ENCODE measurements at regions of chr6 and their contacts with region 1.

Region 1: GRCh38 chr6:73520688-73521350 is at the start of gene EEF1A1:
- DNase-seq: peak; percentile 100
- H3K4me3 ChIP-seq: peak within 1 kb of the TSS; percentile 99
- H3K27ac ChIP-seq: peak within 1 kb of the TSS; percentile 100
- H3K27me3 ChIP-seq: no peaks in the 10 kb centered on the region
- CTCF ChIP-seq: no peak
- polyA plus RNA-seq, gene EEF1A1: 24,076 and 25,115 TPM in 2 replicates

Region 2: DNA sequence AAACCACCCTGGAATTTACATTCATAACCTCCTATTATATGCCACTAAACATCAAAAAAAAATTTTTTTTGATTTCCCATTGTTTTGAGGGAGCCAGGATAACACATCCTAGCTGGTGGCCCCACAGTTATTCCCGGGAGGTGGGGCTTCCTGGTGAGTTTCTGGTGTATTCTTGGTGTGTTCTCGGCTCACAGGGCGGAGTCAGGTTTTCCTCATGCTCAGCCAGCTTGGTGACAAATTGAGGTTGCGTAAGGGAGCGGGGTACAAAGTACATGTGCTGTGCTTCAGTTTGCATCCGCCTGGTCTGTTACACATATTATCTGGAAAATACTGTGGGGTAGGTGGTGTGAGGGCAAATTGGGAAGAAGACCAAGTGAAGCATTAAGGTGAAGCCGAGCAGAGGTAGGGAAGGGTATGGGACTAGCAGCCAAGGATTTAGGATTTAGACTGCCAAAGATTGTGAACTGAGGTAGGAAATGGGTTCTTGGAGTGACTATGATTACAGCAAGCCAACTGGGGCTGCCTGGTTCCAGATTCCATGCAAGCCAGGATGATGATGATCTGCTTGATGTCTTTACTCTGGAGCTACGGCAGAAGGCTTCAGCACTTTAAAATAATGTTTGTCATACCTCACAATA is 46.3 kb after region 1 on chr6:
- CTCF ChIA-PET with region 1: no interaction called
- POLR2A ChIA-PET with region 1: interaction called, 16 read pairs
- DNase-seq: no peak
- H3K4me3 ChIP-seq: no peak overlapping the region
- H3K27ac ChIP-seq: no peak overlapping the region
- H3K27me3 ChIP-seq: no peaks in the 10 kb centered on the region
- CTCF ChIP-seq: no peak

Region 3: GRCh38 chr6:73580247-73581149 is 59.7 kb after region 1 on chr6:
- CTCF ChIA-PET with region 1: interaction called, 3 read pairs
- POLR2A ChIA-PET with region 1: interaction called, 142 read pairs
- DNase-seq: peak; percentile 94
- H3K4me3 ChIP-seq: peak overlapping the region; percentile 50
- H3K27ac ChIP-seq: peak overlapping the region; percentile 100
- H3K27me3 ChIP-seq: no peaks in the 10 kb centered on the region
- CTCF ChIP-seq: peak; percentile 54

Region 4: GRCh38 chr6:73585566-73586415 is 65.0 kb after region 1 on chr6:
- CTCF ChIA-PET with region 1: no interaction called
- POLR2A ChIA-PET with region 1: interaction called, 142 read pairs
- DNase-seq: peak; percentile 34
- H3K4me3 ChIP-seq: peak overlapping the region; percentile 14
- H3K27ac ChIP-seq: peak overlapping the region; percentile 88
- H3K27me3 ChIP-seq: no peaks in the 10 kb centered on the region
- CTCF ChIP-seq: no peak

Region 5: DNA sequence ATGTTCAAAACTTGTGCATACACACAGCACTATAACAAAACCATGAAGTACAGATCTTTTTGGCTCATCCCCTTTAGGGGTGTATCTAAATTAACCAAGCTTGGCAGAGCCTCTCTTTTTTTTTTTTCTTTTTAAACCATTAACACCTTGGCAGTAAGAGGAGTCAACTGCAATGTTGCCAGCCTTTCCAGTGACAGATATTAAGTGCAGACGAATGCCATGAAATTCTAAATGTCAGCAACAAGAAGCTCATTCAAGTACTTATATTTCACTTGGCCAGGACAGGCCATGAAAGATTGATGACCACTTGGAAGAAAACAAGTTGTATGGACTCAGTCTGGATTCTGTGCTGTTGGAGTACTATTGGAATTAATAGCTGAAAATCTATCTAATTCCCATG is 83.2 kb after region 1 on chr6:
- CTCF ChIA-PET with region 1: interaction called, 3 read pairs
- POLR2A ChIA-PET with region 1: interaction called, 11 read pairs
- DNase-seq: no peak
- H3K4me3 ChIP-seq: no peak overlapping the region
- H3K27ac ChIP-seq: no peak overlapping the region
- H3K27me3 ChIP-seq: no peaks in the 10 kb centered on the region
- CTCF ChIP-seq: no peak

Region 6: GRCh38 chr6:73610444-73611275 is 89.8 kb after region 1 on chr6:
- CTCF ChIA-PET with region 1: interaction called, 19 read pairs
- POLR2A ChIA-PET with region 1: interaction called, 28 read pairs
- DNase-seq: no peak
- H3K4me3 ChIP-seq: no peak overlapping the region
- H3K27ac ChIP-seq: no peak overlapping the region
- H3K27me3 ChIP-seq: no peaks in the 10 kb centered on the region
- CTCF ChIP-seq: peak; percentile 66